PC-9 (cell line): ENCODE measurements at regions of chr5 and their contacts with region 1.

Region 1: DNA sequence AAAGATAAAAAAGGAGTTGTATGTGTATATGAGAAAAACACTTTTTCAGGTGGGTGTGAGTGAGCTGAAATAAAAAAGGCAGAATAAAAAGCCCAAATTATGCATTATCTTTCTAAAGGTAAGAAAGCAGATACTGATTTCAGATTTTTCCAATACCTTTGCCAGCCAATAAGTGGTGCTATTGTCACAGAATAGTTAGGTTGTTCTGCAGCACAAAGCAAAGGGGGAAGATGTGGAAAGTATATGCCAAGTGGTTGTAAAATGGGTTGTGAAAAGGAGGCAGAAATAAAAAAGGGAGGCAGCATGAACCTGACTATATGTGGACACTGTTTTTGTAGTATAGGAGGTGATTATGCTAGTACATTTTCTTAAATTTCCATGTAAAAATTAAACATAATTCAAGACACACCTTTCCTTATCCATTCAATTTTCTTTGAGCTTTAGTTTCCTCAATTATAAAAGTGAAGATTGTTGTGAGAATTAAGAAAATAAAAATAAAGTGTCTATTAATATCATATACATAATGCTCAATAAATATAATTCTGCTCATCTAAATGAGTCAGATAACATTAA is 106.7 kb downstream of the SMIM15 start:
- DNase-seq: peak in 1 of 2 experiments; percentile 42
- H3K4me3 ChIP-seq: no peak overlapping the region
- H3K27ac ChIP-seq: no peak overlapping the region
- H3K4me1 ChIP-seq: peaks cover 29% of the 10 kb centered on the region
- H3K27me3 ChIP-seq: no peaks in the 10 kb centered on the region
- CTCF ChIP-seq: peak; percentile 75

Region 2: GRCh38 chr5:60944904-60945812 is 110.4 kb before region 1 on chr5 and contains the starts of genes ERCC8 and NDUFAF2:
- CTCF ChIA-PET with region 1: no interaction called
- POLR2A ChIA-PET with region 1: no interaction called
- intact Hi-C with region 1: loop called (anchors 5 kb)
- DNase-seq: peak; percentile 84 to 86
- H3K4me3 ChIP-seq: peak within 1 kb of the TSS; percentile 98
- H3K27ac ChIP-seq: peak within 1 kb of the TSS; percentile 70
- H3K4me1 ChIP-seq: peaks cover 26% of the 10 kb centered on the region
- H3K27me3 ChIP-seq: no peaks in the 10 kb centered on the region
- CTCF ChIP-seq: no peak
- total RNA-seq, gene ERCC8: 8.7 and 13.0 TPM in 2 replicates
- total RNA-seq, gene NDUFAF2: 20.7 and 42.7 TPM in 2 replicates

Region 3: GRCh38 chr5:61357745-61358144 is 302.2 kb after region 1 on chr5:
- CTCF ChIA-PET with region 1: interaction called, 15 read pairs
- POLR2A ChIA-PET with region 1: no interaction called
- intact Hi-C with region 1: no loop called
- DNase-seq: no peak
- H3K4me3 ChIP-seq: no peak overlapping the region
- H3K27ac ChIP-seq: no peak overlapping the region
- H3K4me1 ChIP-seq: no peaks in the 10 kb centered on the region
- H3K27me3 ChIP-seq: no peaks in the 10 kb centered on the region
- CTCF ChIP-seq: peak; percentile 66

Region 4: DNA sequence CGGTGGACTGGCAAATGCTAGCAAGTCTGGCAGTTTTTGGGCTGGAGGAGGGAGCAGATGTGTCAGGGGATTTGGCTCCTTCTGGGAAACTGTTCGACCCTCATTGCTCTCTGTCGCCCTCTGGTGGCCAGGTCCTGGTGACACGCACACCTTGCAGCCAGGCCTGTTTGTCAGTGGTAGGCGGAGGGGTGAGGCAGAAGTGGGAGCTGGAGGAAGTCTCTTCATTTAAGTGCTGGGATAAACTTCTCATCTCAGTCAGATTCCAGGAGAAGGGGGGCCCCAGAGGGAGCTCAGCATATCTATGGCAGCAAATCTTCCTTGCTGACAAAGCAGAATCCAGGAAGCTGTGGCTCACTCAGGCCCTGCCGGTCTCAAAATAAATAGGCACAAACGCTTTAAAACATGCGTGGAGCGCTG is 603.1 kb after region 1 on chr5:
- CTCF ChIA-PET with region 1: no interaction called
- POLR2A ChIA-PET with region 1: no interaction called
- intact Hi-C with region 1: loop called (anchors 1 kb)
- DNase-seq: peak in 1 of 2 experiments; percentile 82
- H3K4me3 ChIP-seq: no peak overlapping the region
- H3K27ac ChIP-seq: no peak overlapping the region
- H3K4me1 ChIP-seq: no peaks in the 10 kb centered on the region
- H3K27me3 ChIP-seq: no peaks in the 10 kb centered on the region
- CTCF ChIP-seq: peak; percentile 94

Region 5: GRCh38 chr5:61933787-61934626 is 878.5 kb after region 1 on chr5:
- CTCF ChIA-PET with region 1: interaction called, 3 read pairs
- POLR2A ChIA-PET with region 1: no interaction called
- intact Hi-C with region 1: loop called (anchors 1 kb)
- DNase-seq: peak in 1 of 2 experiments; percentile 41
- H3K4me3 ChIP-seq: no peak overlapping the region
- H3K27ac ChIP-seq: no peak overlapping the region
- H3K4me1 ChIP-seq: no peaks in the 10 kb centered on the region
- H3K27me3 ChIP-seq: 0 out of 2 replicates have a peak, but pooled peaks cover 13% of the 10 kb centered on the region
- CTCF ChIP-seq: peak; percentile 62